OCI-LY7 (cell line): ENCODE measurements at regions of chr2 and their contacts with region 1.

Region 1: DNA sequence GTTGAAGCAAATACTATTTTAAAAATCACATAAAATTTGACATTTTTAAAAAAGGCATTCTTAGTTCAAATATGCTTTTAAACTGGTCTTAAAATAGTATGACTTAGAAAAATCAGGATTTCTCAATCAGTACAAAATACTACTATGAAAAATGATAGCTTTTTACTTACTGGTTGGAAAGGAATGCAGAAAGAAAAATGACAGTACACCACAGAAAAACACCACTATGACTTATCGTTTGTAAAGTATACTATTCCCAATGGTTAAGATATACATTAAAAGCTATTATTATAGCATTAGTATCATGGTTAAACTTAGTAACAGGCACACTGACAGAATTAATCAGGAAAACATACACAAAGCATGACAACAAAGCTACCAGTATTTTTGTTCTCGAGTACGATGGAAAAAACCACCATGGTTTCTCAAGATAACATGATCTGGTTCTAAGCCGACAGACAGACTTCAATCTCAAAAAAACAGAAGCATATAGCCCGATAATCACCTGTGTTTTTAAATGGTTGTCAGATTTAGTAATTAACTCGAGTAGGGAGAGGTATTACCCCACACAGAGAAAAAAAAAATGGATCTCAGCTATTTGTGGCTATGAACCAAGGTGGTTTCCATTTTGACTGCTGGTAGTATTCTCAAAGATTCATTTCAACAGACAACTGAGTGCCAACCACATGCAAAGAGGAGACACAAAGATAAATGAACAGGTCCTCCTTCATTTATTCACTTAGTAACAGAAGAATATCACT is 39.1 kb downstream of the CUL3 start:
- DNase-seq: no peak
- H3K4me3 ChIP-seq: peak overlapping the region; percentile 44
- H3K27ac ChIP-seq: peak overlapping the region; percentile 51
- H3K4me1 ChIP-seq: peaks cover 37% of the 10 kb centered on the region
- CTCF ChIP-seq: no peak

Region 2: GRCh38 chr2:223148516-223148915 is 1397.5 kb before region 1 on chr2:
- CTCF ChIA-PET with region 1: no interaction called
- POLR2A ChIA-PET with region 1: no interaction called
- intact Hi-C with region 1: no loop called
- DNase-seq: no peak
- H3K4me3 ChIP-seq: no peak overlapping the region
- H3K27ac ChIP-seq: no peak overlapping the region
- H3K4me1 ChIP-seq: no peaks in the 10 kb centered on the region
- CTCF ChIP-seq: no peak

Region 3: DNA sequence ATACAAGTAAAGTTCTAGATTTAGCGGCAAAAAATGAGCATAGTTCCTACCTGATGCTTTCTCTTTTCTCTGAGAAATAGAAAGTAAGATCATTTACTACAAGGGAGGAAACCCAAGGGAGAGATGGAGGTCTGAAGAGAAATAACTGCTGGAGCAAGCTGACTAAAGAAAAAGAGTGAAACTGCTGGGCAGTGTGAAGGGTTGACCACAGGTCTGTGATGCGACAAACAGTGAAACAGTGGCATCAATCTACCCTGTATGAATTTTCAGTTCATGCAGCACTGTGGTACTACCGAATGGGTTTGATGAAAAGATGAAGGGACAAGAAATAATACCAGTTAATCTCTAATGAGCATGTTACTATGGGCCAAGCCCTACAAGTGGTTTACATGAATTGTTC is 13.1 kb before region 1 on chr2:
- CTCF ChIA-PET with region 1: interaction called, 3 read pairs
- POLR2A ChIA-PET with region 1: interaction called, 10 read pairs
- intact Hi-C with region 1: no loop called
- DNase-seq: no peak
- H3K4me3 ChIP-seq: no peak overlapping the region
- H3K27ac ChIP-seq: no peak overlapping the region
- H3K4me1 ChIP-seq: peaks cover 8% of the 10 kb centered on the region
- CTCF ChIP-seq: no peak